Ovary (tissue), 10 donors: ENCODE measurements at regions of chr12 and their contacts with region 1.

Region 1: DNA sequence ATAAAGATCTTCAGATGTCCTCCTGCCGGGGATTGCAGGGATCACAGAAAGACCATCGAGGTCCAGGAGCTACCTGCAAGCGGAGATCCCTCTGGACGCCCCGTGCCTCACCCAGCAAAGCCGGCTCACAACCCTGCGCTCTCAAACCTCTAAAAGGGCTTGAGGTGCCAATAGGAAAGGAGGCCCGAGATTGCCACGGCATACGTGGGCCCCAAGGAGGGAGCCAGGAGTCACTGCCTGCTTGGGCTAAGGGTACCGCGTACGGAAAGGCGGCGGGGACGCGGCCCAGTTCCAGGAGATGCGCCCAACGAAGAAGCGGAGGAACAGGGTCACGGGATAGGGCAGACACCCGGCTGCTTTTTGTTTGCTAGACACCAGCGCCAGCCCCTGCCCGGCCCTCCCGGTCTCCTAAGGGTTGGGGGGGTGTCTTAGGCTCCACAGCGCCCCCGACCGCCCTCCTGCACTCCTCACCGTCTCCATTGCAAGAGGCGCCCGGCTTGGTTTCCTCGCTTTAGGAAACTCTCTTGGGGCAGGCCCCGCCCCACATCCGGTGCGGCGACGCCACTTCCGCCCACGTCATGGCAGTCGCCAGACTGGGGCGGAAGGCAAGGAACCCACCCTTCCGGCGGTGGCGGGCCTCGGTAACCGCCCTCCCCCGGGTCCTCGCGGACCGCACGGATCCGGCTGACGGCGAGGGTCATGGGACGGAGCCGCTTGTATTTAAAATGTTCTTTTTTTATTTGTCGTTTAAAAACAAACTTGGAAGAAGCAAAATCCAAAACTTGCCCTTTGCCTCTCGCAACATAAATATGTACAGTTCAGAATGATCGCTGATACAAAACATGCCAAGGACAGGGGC is at the start of gene PRKAG1:
- DNase-seq: peak; percentile 93 to 97 (median 95)
- H3K4me3 ChIP-seq: peak within 1 kb of the TSS; percentile 76
- H3K27ac ChIP-seq: peak within 1 kb of the TSS; percentile 54 to 66
- H3K4me1 ChIP-seq: peaks cover 2% of the 10 kb centered on the region
- H3K27me3 ChIP-seq: no peaks in the 10 kb centered on the region
- CTCF ChIP-seq: peak; percentile 8 to 40 (median 37)
- EP300 ChIP-seq: no peak
- POLR2A ChIP-seq: peak; percentile 89
- total RNA-seq, gene PRKAG1: 25.6 to 58.2 (median 35.8) TPM

Region 2: GRCh38 chr12:48017496-48017895 is 1001.0 kb before region 1 on chr12:
- intact Hi-C with region 1: no loop called
- DNase-seq: no peak
- H3K4me3 ChIP-seq: no peak overlapping the region
- H3K27ac ChIP-seq: no peak overlapping the region
- H3K4me1 ChIP-seq: no peaks in the 10 kb centered on the region
- H3K27me3 ChIP-seq: no peaks in the 10 kb centered on the region
- CTCF ChIP-seq: no peak
- EP300 ChIP-seq: no peak
- POLR2A ChIP-seq: no peak

Region 3: GRCh38 chr12:49110464-49111155 is 92.1 kb after region 1 on chr12 and contains the start of gene LMBR1L:
- intact Hi-C with region 1: loop called in 1 of 4 experiments (anchors 10 kb)
- DNase-seq: peak; percentile 95 to 97 (median 96)
- H3K4me3 ChIP-seq: peak within 1 kb of the TSS; percentile 95
- H3K27ac ChIP-seq: peak within 1 kb of the TSS; percentile 88 to 98
- H3K4me1 ChIP-seq: peaks cover 17% of the 10 kb centered on the region
- H3K27me3 ChIP-seq: no peaks in the 10 kb centered on the region
- CTCF ChIP-seq: peak; percentile 38 to 81 (median 80)
- EP300 ChIP-seq: no peak
- POLR2A ChIP-seq: peak; percentile 82
- total RNA-seq, gene LMBR1L: 66.3 to 95.8 (median 69.5) TPM

Region 4: GRCh38 chr12:49403971-49404450 is 385.5 kb after region 1 on chr12:
- intact Hi-C with region 1: no loop called
- DNase-seq: no peak
- H3K4me3 ChIP-seq: no peak overlapping the region
- H3K27ac ChIP-seq: no peak overlapping the region
- H3K4me1 ChIP-seq: no peaks in the 10 kb centered on the region
- H3K27me3 ChIP-seq: no peaks in the 10 kb centered on the region
- CTCF ChIP-seq: no peak
- EP300 ChIP-seq: no peak
- POLR2A ChIP-seq: no peak

Region 5: GRCh38 chr12:49698619-49699545 is 680.4 kb after region 1 on chr12:
- intact Hi-C with region 1: no loop called
- DNase-seq: no peak
- H3K4me3 ChIP-seq: no peak overlapping the region
- H3K27ac ChIP-seq: no peak overlapping the region
- H3K4me1 ChIP-seq: peaks cover 12% of the 10 kb centered on the region
- H3K27me3 ChIP-seq: no peaks in the 10 kb centered on the region
- CTCF ChIP-seq: no peak
- EP300 ChIP-seq: no peak
- POLR2A ChIP-seq: no peak